OCI-LY7 (cell line): ENCODE measurements at regions of chr2 and their contacts with region 1.

Region 1: GRCh38 chr2:42944779-42945415 is 152.5 kb upstream of the HAAO start:
- DNase-seq: no peak
- H3K4me3 ChIP-seq: no peak overlapping the region
- H3K27ac ChIP-seq: no peak overlapping the region
- H3K4me1 ChIP-seq: peaks cover 16% of the 10 kb centered on the region
- CTCF ChIP-seq: no peak

Region 2: GRCh38 chr2:41414486-41415230 is 1530.2 kb before region 1 on chr2:
- CTCF ChIA-PET with region 1: no interaction called
- POLR2A ChIA-PET with region 1: no interaction called
- intact Hi-C with region 1: no loop called
- DNase-seq: peak; percentile 29
- H3K4me3 ChIP-seq: no peak overlapping the region
- H3K27ac ChIP-seq: no peak overlapping the region
- H3K4me1 ChIP-seq: no peaks in the 10 kb centered on the region
- CTCF ChIP-seq: peak; percentile 86

Region 3: GRCh38 chr2:42828487-42829425 is 116.1 kb before region 1 on chr2:
- CTCF ChIA-PET with region 1: no interaction called
- POLR2A ChIA-PET with region 1: no interaction called
- intact Hi-C with region 1: loop called (anchors 5 kb)
- DNase-seq: peak; percentile 76
- H3K4me3 ChIP-seq: no peak overlapping the region
- H3K27ac ChIP-seq: no peak overlapping the region
- H3K4me1 ChIP-seq: no peaks in the 10 kb centered on the region
- CTCF ChIP-seq: peak; percentile 94

Region 4: DNA sequence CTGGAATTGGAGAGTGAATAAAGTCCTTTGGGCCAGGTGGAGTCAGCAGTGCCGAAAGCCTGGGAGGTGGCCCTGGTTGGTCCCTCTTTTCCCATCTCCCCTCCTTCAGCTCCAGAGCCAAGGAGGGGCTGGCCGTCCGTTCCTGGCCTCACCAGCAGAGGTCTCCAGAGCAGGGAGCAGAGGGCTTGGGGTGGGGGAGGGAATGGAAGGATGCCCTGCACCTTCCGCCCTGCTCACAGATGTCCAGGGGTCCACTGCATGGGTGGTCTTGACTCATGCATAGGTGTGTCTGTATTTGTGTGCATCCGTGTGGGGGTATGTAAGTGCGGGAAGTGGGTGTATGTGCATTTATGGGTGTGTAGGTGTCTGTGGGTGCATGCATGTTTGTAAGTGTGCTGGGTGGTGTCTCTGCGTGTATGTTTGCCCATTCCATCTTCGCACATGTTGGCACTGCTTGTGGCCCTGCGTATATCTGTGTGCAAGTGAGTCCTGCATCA is 79.7 kb after region 1 on chr2:
- CTCF ChIA-PET with region 1: interaction called, 4 read pairs
- POLR2A ChIA-PET with region 1: interaction called, 3 read pairs
- intact Hi-C with region 1: loop called (anchors 2 kb)
- DNase-seq: peak; percentile 55
- H3K4me3 ChIP-seq: no peak overlapping the region
- H3K27ac ChIP-seq: no peak overlapping the region
- H3K4me1 ChIP-seq: no peaks in the 10 kb centered on the region
- CTCF ChIP-seq: peak; percentile 88

Region 5: GRCh38 chr2:43131024-43131889 is 186.4 kb after region 1 on chr2:
- CTCF ChIA-PET with region 1: no interaction called
- POLR2A ChIA-PET with region 1: no interaction called
- intact Hi-C with region 1: loop called (anchors 2 kb)
- DNase-seq: peak; percentile 93
- H3K4me3 ChIP-seq: peak overlapping the region; percentile 3
- H3K27ac ChIP-seq: peak overlapping the region; percentile 93
- H3K4me1 ChIP-seq: peaks cover 97% of the 10 kb centered on the region
- CTCF ChIP-seq: peak; percentile 70

Region 6: GRCh38 chr2:43484323-43484930 is 539.5 kb after region 1 on chr2:
- CTCF ChIA-PET with region 1: no interaction called
- POLR2A ChIA-PET with region 1: interaction called, 3 read pairs
- intact Hi-C with region 1: loop called (anchors 2 kb)
- DNase-seq: peak; percentile 83
- H3K4me3 ChIP-seq: no peak overlapping the region
- H3K27ac ChIP-seq: no peak overlapping the region
- H3K4me1 ChIP-seq: no peaks in the 10 kb centered on the region
- CTCF ChIP-seq: peak; percentile 95

Region 7: DNA sequence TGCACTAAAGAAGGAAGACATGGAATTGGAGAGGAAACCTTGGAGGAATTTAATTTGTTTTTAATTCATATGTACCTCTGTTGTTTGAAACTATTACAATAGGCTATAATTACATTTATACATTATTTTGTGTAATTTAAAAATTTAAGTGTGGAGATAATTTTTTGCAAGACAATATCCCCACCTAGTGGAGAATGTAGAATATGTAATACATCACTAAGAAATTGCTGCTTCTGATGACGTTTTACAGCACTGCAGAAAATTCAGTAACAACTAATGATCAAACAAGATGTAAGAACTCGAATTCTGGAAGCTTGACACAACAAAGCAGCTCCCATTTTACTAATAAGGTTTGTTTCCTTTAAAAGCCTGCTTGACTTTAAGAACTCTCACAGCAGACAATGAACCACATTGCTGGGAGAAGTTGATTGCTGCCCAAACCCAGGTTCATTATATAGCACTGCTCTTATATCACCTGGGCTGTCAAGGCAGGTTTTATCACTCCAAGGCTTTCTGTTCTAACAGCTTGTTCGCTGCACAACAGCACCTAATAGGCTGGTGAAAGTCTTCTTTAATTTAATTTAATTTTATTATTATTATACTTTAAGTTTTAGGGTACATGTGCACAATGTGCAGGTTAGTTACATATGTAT is 597.5 kb after region 1 on chr2:
- CTCF ChIA-PET with region 1: no interaction called
- POLR2A ChIA-PET with region 1: no interaction called
- intact Hi-C with region 1: loop called (anchors 5 kb)
- DNase-seq: peak; percentile 62
- H3K4me3 ChIP-seq: no peak overlapping the region
- H3K27ac ChIP-seq: no peak overlapping the region
- H3K4me1 ChIP-seq: no peaks in the 10 kb centered on the region
- CTCF ChIP-seq: peak; percentile 90

Region 8: GRCh38 chr2:43611987-43612894 is 667.3 kb after region 1 on chr2:
- CTCF ChIA-PET with region 1: no interaction called
- POLR2A ChIA-PET with region 1: no interaction called
- intact Hi-C with region 1: loop called (anchors 1 kb)
- DNase-seq: peak; percentile 73
- H3K4me3 ChIP-seq: no peak overlapping the region
- H3K27ac ChIP-seq: no peak overlapping the region
- H3K4me1 ChIP-seq: no peaks in the 10 kb centered on the region
- CTCF ChIP-seq: peak; percentile 96